ENCODE measurements at regions of chr1 and their contacts with region 1.

Region 1: DNA sequence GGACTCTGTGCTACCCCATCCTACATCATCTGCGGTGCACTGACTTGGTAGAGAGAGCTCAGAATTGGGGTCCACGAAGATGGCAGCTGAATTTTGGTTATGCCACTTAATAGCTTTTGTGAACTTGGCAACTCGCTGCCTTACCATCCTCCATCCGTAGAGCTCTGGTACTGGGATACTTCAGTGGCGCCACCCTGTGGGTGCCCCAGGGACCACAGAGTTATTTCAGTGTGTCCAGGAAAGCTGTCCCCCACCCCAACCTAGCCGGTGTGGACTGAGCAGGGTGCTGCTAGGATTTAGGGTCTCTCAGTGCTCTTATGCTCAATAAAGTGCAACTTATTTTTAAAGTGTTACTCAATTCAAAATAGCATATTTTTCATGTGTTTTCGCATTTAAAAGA is 9.0 kb upstream of the USF1 start:
- DNase-seq: no peak
- H3K4me3 ChIP-seq: no peak overlapping the region
- H3K27ac ChIP-seq: no peak overlapping the region
- H3K4me1 ChIP-seq: no peaks in the 10 kb centered on the region
- H3K27me3 ChIP-seq: no peaks in the 10 kb centered on the region
- CTCF ChIP-seq: no peak
- POLR2A ChIP-seq: no peak

Region 2: DNA sequence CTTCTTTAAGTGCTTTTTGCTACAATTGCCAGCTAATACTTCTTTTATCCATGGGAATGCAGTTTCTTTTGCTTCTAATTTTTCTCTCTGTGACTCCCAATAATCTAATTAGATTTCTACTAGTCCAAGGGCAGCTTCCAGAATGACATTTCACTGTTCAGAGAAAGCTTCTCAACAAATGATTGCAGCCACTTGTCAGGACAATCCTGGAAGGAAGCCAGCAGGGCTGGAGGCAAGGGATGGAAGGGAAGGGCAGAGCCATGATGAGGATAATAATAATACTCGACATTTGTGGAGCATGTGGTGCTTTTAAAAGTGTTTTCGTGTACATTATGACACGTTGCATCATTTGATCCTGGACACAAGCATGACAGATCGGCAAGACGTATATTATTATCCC is 53.3 kb before region 1 on chr1:
- intact Hi-C with region 1: loop called in 1 of 2 experiments (anchors 5 kb)
- DNase-seq: peak in 3 of 7 donors; percentile 33 to 56 (median 55)
- H3K4me3 ChIP-seq: no peak overlapping the region
- H3K27ac ChIP-seq: no peak overlapping the region
- H3K4me1 ChIP-seq: peaks cover 8 to 12% of the 10 kb centered on the region in 2 donors
- H3K27me3 ChIP-seq: no peaks in the 10 kb centered on the region
- CTCF ChIP-seq: no peak
- POLR2A ChIP-seq: no peak

Region 3: GRCh38 chr1:161244888-161245287 is 190.1 kb after region 1 on chr1:
- intact Hi-C with region 1: no loop called
- DNase-seq: no peak
- H3K4me3 ChIP-seq: no peak overlapping the region
- H3K27ac ChIP-seq: no peak overlapping the region
- H3K4me1 ChIP-seq: no peaks in the 10 kb centered on the region
- H3K27me3 ChIP-seq: no peaks in the 10 kb centered on the region
- CTCF ChIP-seq: no peak
- POLR2A ChIP-seq: no peak

Region 4: DNA sequence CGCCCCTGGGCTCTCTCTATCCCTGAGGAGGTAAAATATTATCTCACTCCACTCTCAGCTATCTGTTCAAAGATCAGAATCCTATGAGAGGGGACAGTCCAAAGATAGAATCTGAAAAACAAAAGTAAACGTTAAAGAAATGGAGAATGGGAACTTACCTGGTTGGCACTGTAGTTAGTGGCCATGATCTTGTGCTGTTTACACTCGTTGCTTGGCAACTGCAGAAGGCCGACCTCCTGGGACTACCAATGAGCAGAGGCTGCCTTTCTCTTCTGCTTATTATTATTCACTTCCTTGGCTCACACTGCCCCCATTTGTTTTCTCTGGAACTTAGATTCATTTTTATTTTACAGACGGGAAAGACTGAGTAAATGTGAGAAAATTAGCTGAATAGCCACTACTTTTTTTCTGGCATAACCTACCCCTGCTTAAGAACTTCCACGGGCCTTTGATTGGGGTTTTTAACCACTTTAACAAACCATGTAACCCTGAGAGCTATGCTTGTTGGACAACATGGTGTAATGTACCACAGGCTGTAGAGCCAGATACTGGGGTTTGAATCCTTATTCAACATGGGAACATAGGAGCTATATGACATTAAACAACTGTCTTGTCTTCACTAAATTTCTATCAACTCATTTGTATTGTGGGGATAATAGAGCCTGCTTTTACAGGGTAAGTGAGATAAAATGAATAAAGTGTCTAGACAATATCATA is 313.0 kb after region 1 on chr1 and contains the start of gene CFAP126:
- intact Hi-C with region 1: no loop called
- DNase-seq: peak; percentile 72 to 92 (median 85)
- H3K4me3 ChIP-seq: no peak within 1 kb of the TSS
- H3K27ac ChIP-seq: peak within 1 kb of the TSS in 2 of 5 donors; percentile 36 to 42
- H3K4me1 ChIP-seq: peaks cover 15 to 22% of the 10 kb centered on the region in 2 donors
- H3K27me3 ChIP-seq: no peaks in the 10 kb centered on the region
- CTCF ChIP-seq: peak; percentile 28 to 69 (median 50)
- POLR2A ChIP-seq: no peak
- total RNA-seq, gene CFAP126: 0.28 TPM in 1 of 9 donors, not detected in the others